A549 (cell line): ENCODE measurements at regions of chr15 and their contacts with region 1.

Region 1: GRCh38 chr15:32664796-32665195 is 23.3 kb downstream of the SCG5 start:
- DNase-seq: no peak
- ATAC-seq: no peak
- H3K4me3 ChIP-seq: no peak overlapping the region
- H3K27ac ChIP-seq: peak overlapping the region; percentile 29 to 68; a peak in 1 of 6 replicates
- H3K4me1 ChIP-seq: peaks cover 21% of the 10 kb centered on the region
- CTCF ChIP-seq: no peak
- EP300 ChIP-seq: no peak
- POLR2A ChIP-seq: no peak
- RAD21 ChIP-seq: no peak

Region 2: DNA sequence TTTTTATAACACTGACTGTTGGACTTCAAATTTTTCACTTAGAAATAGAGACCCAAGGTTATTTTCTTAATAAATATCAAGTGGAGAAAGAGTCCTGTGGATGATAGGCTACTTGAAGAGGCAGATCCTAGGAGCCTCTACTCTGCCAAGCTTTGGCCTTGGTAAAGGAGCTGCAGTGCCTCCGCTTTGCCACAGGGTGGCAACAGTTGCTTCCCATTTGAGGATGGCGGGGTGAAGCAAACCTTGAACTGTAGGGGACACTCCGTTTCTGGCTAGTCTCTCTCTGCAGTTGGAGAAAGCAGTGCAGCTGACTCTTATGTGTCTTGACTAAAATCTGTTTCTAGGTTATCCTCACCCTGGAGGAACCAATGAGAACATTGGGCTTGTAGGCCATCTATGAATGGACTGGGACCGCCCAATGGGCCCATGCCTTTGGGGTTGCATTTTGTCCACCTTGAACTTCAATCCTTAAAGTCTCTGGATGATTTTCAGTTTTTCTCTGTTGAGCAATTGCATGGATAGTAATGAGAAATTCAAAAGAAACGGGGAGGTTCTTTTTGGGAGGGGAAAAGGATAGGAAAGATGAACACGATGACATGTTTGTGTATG is 13.5 kb before region 1 on chr15:
- CTCF ChIA-PET with region 1: interaction called, 106 read pairs
- POLR2A ChIA-PET with region 1: no interaction called
- DNase-seq: peak; percentile 76 to 80
- ATAC-seq: peak; percentile 92 to 96
- H3K4me3 ChIP-seq: no peak overlapping the region
- H3K27ac ChIP-seq: peak overlapping the region in 1 of 2 experiments; percentile 9; a peak in 2 of 6 replicates
- H3K4me1 ChIP-seq: peaks cover 7% of the 10 kb centered on the region; the same call in 1 of the 3 replicates
- CTCF ChIP-seq: peak; percentile 88
- EP300 ChIP-seq: no peak
- POLR2A ChIP-seq: no peak
- RAD21 ChIP-seq: peak; percentile 88 to 92

Region 3: DNA sequence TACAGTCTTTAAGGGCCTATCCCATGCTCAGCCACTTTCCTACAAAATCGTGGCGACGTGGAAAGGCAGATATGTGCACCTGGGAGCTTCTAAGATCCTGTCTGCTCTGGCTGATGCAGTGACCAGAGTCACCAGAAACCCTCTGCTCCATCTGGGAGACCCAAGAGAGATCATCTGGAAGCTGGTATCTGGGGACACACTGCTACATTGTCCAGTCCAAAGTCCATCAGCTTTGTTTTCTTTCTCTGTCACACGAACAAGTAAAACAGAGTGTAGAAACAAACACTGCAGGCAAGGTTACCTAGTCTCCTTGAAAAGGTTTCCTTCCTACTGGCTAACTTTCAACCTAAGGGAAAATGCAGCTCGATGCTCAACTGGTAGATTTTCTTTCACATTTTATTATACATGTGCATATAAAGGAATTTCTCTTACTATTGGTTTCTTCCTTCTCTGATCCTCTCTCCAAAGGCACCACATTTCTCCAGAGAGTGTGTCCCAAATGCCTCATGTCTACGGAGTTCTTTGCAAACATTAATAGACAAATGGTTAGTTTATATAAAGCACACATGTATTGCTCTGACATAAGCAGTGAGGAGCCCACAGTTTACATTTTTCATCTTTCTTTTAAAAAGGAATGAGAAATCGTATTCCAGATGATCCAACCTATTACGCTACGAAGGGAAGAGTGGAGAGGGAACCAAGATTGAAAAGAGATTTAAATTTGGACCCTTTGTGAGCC is 44.7 kb after region 1 on chr15:
- CTCF ChIA-PET with region 1: interaction called, 15 read pairs
- POLR2A ChIA-PET with region 1: no interaction called
- DNase-seq: no peak
- ATAC-seq: peak in 1 of 2 experiments; percentile 55; a peak in 3 of 6 replicates
- H3K4me3 ChIP-seq: no peak overlapping the region
- H3K27ac ChIP-seq: no peak overlapping the region
- H3K4me1 ChIP-seq: peaks cover 9% of the 10 kb centered on the region
- CTCF ChIP-seq: no peak
- EP300 ChIP-seq: no peak
- POLR2A ChIP-seq: no peak
- RAD21 ChIP-seq: no peak

Region 4: DNA sequence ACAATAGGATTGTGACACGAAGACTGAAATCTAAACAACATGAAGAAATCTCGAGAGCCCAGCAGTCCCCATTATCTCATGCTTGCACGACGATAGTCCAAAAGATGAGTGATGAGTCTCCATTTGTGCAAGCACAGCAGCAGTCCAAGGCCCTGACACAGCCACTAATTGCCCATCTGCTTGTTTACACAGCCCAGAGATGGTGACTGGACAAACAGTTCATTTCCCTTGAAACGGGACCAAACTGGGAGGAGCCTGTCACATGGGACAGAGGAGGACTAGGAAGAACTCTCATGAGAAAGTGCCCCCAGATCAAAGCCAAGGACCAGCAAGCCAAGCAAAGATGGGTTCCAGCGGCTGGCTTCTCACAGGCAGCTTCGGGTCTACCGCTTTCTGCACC is 174.0 kb after region 1 on chr15:
- CTCF ChIA-PET with region 1: interaction called, 57 read pairs
- POLR2A ChIA-PET with region 1: interaction called, 3 read pairs
- DNase-seq: peak; percentile 29 to 81
- ATAC-seq: peak; percentile 65 to 87; a peak in 5 of 6 replicates
- H3K4me3 ChIP-seq: no peak overlapping the region
- H3K27ac ChIP-seq: peak overlapping the region; percentile 59 to 73
- H3K4me1 ChIP-seq: peaks cover 30% of the 10 kb centered on the region
- CTCF ChIP-seq: no peak
- EP300 ChIP-seq: no peak
- POLR2A ChIP-seq: no peak
- RAD21 ChIP-seq: 0 out of 5 replicates have a peak, but pooled peaks of 1 of the 2 experiments have one; percentile 12

Region 5: GRCh38 chr15:32855942-32856341 is 191.1 kb after region 1 on chr15:
- CTCF ChIA-PET with region 1: interaction called, 41 read pairs
- POLR2A ChIA-PET with region 1: no interaction called
- DNase-seq: peak; percentile 65 to 93
- ATAC-seq: peak; percentile 93 to 96
- H3K4me3 ChIP-seq: no peak overlapping the region
- H3K27ac ChIP-seq: peak overlapping the region; percentile 79 to 86
- H3K4me1 ChIP-seq: peaks cover 61% of the 10 kb centered on the region
- CTCF ChIP-seq: no peak
- EP300 ChIP-seq: peak; percentile 63 to 65; a peak in 2 of 5 replicates
- POLR2A ChIP-seq: no peak
- RAD21 ChIP-seq: peak in 1 of 2 experiments; percentile 37; a peak in 2 of 5 replicates

Region 6: DNA sequence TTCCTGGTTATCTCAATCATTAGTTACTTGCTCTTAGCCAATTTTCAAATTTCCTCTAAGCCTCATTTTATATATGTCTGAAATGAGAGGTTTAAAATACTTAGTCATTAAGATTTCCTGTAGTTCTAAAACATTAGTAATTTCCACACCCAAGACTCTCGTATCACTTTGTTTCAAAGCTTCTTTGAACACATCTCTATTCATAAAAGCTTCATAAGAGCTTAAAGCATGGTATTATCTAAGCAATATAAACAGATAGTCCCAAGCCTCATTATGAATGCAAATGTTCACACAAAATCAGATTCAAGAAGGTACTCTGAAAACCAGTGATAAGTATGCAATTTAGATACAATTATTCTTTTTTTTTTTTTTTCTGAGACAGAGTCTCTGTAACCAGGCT is 312.7 kb after region 1 on chr15:
- CTCF ChIA-PET with region 1: interaction called, 12 read pairs
- POLR2A ChIA-PET with region 1: no interaction called
- DNase-seq: no peak
- ATAC-seq: no peak
- H3K4me3 ChIP-seq: no peak overlapping the region
- H3K27ac ChIP-seq: no peak overlapping the region
- H3K4me1 ChIP-seq: no peaks in the 10 kb centered on the region
- CTCF ChIP-seq: no peak
- EP300 ChIP-seq: no peak
- POLR2A ChIP-seq: no peak
- RAD21 ChIP-seq: no peak

Region 7: DNA sequence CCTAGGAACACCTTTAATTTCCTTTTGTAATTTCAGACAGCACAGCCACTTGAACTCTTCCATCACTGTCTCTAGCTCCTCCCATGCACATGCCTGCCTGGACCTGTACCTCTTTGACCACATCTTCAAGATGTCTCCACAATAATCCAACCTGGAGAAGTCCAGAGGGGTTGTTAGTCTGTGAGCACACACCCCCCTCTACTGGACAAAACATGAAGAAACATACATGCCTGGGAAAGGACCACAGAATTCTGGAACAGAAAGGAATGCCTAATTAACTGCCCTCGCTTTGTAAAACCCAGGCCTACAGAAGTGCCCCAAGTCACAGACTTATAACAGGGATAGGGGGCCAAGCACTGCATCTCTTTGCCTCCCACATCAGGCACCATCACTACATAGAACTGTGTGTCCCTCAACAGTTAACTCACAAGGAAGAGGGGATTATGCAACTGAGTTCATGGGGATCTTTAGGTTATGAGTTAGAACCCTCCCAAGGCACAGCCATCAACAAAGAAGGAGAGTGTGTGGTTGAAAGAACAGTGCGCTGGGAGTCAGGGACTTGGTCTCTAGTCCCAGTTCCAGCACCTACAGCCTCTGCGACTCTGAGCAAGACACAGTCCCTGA is 468.0 kb after region 1 on chr15:
- CTCF ChIA-PET with region 1: interaction called, 23 read pairs
- POLR2A ChIA-PET with region 1: no interaction called
- DNase-seq: peak; percentile 65 to 74
- ATAC-seq: peak; percentile 94 to 98
- H3K4me3 ChIP-seq: no peak overlapping the region
- H3K27ac ChIP-seq: no peak overlapping the region
- H3K4me1 ChIP-seq: no peaks in the 10 kb centered on the region; the same call in 2 of the 3 replicates
- CTCF ChIP-seq: peak; percentile 91
- EP300 ChIP-seq: no peak
- POLR2A ChIP-seq: no peak
- RAD21 ChIP-seq: peak; percentile 92 to 95